GM12878 (cell line): ENCODE measurements at regions of chr13 and their contacts with region 1.

Region 1: DNA sequence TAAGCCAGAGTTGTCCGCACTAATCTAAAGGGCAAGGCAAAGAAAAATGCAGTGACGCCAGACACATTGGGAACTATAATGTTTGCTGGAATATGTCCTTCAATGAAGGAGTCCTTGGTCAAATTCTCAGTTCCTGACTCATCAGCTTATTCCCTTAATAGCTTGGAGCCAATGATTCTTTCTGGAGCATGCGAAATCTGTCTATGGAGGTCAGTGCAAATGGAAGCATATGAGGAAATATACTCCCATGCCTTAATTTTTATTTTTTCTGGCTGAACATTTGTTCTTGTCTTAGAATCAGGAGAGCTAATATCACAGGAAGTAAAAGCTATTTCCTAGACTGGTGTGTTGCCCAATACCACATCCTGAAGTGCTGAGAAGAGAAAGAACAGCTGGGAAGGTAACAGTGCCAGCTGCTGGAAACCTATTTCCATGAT is 289.8 kb upstream of the SPRY2 start:
- DNase-seq: no peak
- ATAC-seq: no peak
- H3K4me3 ChIP-seq: no peak overlapping the region
- H3K27ac ChIP-seq: no peak overlapping the region
- H3K4me1 ChIP-seq: no peaks in the 10 kb centered on the region
- H3K27me3 ChIP-seq: no peaks in the 10 kb centered on the region
- CTCF ChIP-seq: no peak
- EP300 ChIP-seq: no peak
- POLR2A ChIP-seq: no peak
- RAD21 ChIP-seq: no peak

Region 2: GRCh38 chr13:80618781-80619180 is 11.9 kb before region 1 on chr13:
- CTCF ChIA-PET with region 1: interaction called, 5 read pairs
- POLR2A ChIA-PET with region 1: interaction called, 3 read pairs
- RAD21 ChIA-PET with region 1: no interaction called
- SMC1A ChIA-PET with region 1: interaction called, 11 read pairs
- in situ Hi-C with region 1: no loop called
- intact Hi-C with region 1: no loop called
- DNase-seq: no peak
- ATAC-seq: no peak
- H3K4me3 ChIP-seq: no peak overlapping the region
- H3K27ac ChIP-seq: no peak overlapping the region
- H3K4me1 ChIP-seq: no peaks in the 10 kb centered on the region
- H3K27me3 ChIP-seq: no peaks in the 10 kb centered on the region
- CTCF ChIP-seq: no peak
- EP300 ChIP-seq: no peak
- POLR2A ChIP-seq: no peak
- RAD21 ChIP-seq: no peak